Esophagus squamous epithelium (tissue), 5 donors: ENCODE measurements at regions of chr6 and their contacts with region 1.

Region 1: GRCh38 chr6:47737406-47737805 is 39.0 kb downstream of the ADGRF4 start:
- DNase-seq: no peak
- H3K4me3 ChIP-seq: no peak overlapping the region
- H3K27ac ChIP-seq: no peak overlapping the region
- H3K4me1 ChIP-seq: peaks cover 0 to 18% (median 0%) of the 10 kb centered on the region in 3 donors
- H3K27me3 ChIP-seq: no peaks in the 10 kb centered on the region
- CTCF ChIP-seq: no peak
- POLR2A ChIP-seq: no peak

Region 2: DNA sequence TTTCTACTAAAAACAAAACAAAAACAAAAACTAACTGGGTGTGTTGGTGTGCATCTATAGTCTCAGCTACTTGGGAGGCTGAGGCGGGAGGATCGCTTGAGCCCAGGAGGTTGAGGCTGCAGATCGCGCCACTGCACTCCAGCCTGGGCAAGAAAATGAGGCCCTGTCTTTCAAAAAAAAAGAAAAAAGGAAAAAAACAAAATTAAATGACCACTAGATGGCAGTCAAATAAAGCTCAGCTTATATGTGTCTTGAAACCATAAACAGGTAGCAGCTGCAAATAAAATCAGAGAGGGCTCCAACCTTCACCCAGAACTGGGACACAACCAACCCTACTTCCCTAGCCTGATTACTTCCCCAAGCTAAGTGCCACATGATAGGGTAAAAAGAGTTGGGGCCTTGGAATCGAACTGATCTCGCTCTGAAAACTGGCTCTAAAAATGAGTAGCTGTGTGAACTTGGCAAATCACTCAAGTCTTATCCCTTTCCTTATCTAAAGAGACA is 106.1 kb before region 1 on chr6:
- intact Hi-C with region 1: loop called (anchors 5 kb)
- DNase-seq: no peak
- H3K4me3 ChIP-seq: no peak overlapping the region
- H3K27ac ChIP-seq: no peak overlapping the region
- H3K4me1 ChIP-seq: peaks cover 0 to 10% (median 6%) of the 10 kb centered on the region in 3 donors
- H3K27me3 ChIP-seq: no peaks in the 10 kb centered on the region
- CTCF ChIP-seq: peak; percentile 47 to 70 (median 59)
- POLR2A ChIP-seq: no peak